ENCODE measurements at regions of chr4 and their contacts with region 1.

Region 1: DNA sequence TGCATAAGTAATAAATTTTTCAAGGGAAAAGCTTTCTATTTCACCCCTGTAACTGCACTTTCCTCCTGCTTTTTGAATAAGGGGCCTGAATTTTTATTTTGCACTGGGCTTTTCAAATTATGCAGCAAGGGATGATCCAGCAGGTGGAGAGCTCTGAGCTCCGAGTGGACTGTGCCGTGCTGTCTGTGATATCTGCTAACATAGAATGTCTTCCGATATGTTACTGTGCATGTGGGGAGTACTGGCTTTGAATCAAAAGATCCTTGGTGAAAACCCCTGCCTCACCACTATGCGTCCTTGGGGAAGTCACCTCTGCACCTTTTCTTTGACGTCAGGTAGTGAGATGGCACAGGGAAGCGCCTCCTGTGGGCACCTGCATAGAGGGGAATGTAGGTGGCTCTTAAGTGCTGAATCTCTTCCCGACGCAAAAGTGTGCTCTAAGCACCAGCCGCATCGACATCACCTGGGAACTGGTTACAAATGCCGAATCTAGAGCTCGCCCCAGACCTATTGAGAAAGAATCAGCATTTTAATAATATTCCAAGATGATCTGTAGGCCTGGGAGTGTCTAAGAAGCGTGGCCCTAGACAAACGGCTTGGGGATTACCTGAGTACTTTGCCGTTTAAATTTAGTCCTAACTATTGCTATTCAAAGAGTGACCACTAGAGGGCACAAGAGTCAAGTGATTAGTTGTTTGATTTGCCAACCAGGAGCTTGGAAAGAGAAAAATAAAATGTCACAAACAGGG is 19.2 kb upstream of the WFS1 start:
- DNase-seq: peak; percentile 74
- H3K4me3 ChIP-seq: no peak overlapping the region
- H3K27ac ChIP-seq: no peak overlapping the region
- H3K4me1 ChIP-seq: no peaks in the 10 kb centered on the region
- H3K27me3 ChIP-seq: peaks cover 53% of the 10 kb centered on the region
- CTCF ChIP-seq: peak; percentile 80

Region 2: GRCh38 chr4:5798462-5798861 is 451.9 kb before region 1 on chr4:
- CTCF ChIA-PET with region 1: no interaction called
- POLR2A ChIA-PET with region 1: no interaction called
- intact Hi-C with region 1: no loop called
- DNase-seq: no peak
- H3K4me3 ChIP-seq: no peak overlapping the region
- H3K27ac ChIP-seq: no peak overlapping the region
- H3K4me1 ChIP-seq: no peaks in the 10 kb centered on the region
- H3K27me3 ChIP-seq: no peaks in the 10 kb centered on the region
- CTCF ChIP-seq: no peak

Region 3: GRCh38 chr4:5979976-5980375 is 270.4 kb before region 1 on chr4:
- CTCF ChIA-PET with region 1: no interaction called
- POLR2A ChIA-PET with region 1: no interaction called
- intact Hi-C with region 1: no loop called
- DNase-seq: peak; percentile 77
- H3K4me3 ChIP-seq: peak overlapping the region; percentile 9
- H3K27ac ChIP-seq: no peak overlapping the region
- H3K4me1 ChIP-seq: peaks cover 23% of the 10 kb centered on the region
- H3K27me3 ChIP-seq: no peaks in the 10 kb centered on the region
- CTCF ChIP-seq: peak; percentile 80

Region 4: DNA sequence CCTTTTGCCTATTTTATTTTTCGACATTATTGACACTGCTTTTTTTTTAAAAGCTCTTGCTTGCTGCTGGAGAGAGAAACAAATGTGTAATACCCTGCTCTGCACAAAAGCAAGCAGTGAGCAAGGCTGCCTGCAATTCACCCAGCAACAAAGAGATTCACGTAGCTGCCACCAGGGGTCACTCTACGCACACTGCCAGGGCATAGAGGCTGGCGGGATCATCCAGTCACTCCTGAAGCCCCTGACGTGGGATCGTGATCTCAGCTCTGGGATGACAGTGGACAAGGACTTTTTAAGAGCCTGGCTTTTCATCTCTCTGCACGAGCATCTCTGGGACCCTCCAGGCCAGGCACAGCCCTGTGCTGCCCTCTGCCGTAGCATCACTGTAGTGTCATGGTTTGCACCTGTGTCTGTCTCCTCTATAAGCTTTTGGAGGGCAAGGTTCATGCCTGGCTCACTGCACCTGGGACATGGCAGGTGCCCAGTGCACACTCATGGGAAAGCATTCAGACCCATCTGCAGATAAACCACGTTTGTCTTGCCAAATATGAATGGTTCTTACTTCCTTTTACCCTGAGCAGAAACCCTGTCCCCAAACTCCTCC is 252.0 kb before region 1 on chr4:
- CTCF ChIA-PET with region 1: interaction called, 11 read pairs
- POLR2A ChIA-PET with region 1: no interaction called
- intact Hi-C with region 1: no loop called
- DNase-seq: peak; percentile 77
- H3K4me3 ChIP-seq: no peak overlapping the region
- H3K27ac ChIP-seq: no peak overlapping the region
- H3K4me1 ChIP-seq: no peaks in the 10 kb centered on the region
- H3K27me3 ChIP-seq: peaks cover 34% of the 10 kb centered on the region
- CTCF ChIP-seq: peak; percentile 95

Region 5: GRCh38 chr4:6546681-6547447 is 296.5 kb after region 1 on chr4:
- CTCF ChIA-PET with region 1: interaction called, 5 read pairs
- POLR2A ChIA-PET with region 1: no interaction called
- intact Hi-C with region 1: loop called (anchors 2 kb)
- DNase-seq: peak; percentile 76
- H3K4me3 ChIP-seq: no peak overlapping the region
- H3K27ac ChIP-seq: no peak overlapping the region
- H3K4me1 ChIP-seq: no peaks in the 10 kb centered on the region
- H3K27me3 ChIP-seq: peaks cover 57% of the 10 kb centered on the region
- CTCF ChIP-seq: peak; percentile 97